ENCODE measurements at regions of chr10 and their contacts with region 1.

Region 1: GRCh38 chr10:2425320-2425719 is 642.0 kb upstream of the PFKP start:
- DNase-seq: no peak
- H3K4me3 ChIP-seq: no peak overlapping the region
- H3K4me3 Mint-ChIP-seq: no peak overlapping the region
- H3K27ac ChIP-seq: no peak overlapping the region
- H3K27ac Mint-ChIP-seq: no peak overlapping the region
- H3K4me1 ChIP-seq: no peaks in the 10 kb centered on the region
- H3K4me1 Mint-ChIP-seq: no peaks in the 10 kb centered on the region
- H3K27me3 ChIP-seq: no peaks in the 10 kb centered on the region
- H3K27me3 Mint-ChIP-seq: peaks cover 0 to 5% of the 10 kb centered on the region in 2 donors

Region 2: GRCh38 chr10:2362331-2362730 is 63.0 kb before region 1 on chr10:
- CTCF ChIA-PET with region 1: no interaction called
- POLR2A ChIA-PET with region 1: no interaction called
- intact Hi-C with region 1: loop called (anchors 5 kb)
- DNase-seq: no peak
- H3K4me3 ChIP-seq: no peak overlapping the region
- H3K4me3 Mint-ChIP-seq: no peak overlapping the region
- H3K27ac ChIP-seq: no peak overlapping the region
- H3K27ac Mint-ChIP-seq: no peak overlapping the region
- H3K4me1 ChIP-seq: no peaks in the 10 kb centered on the region
- H3K4me1 Mint-ChIP-seq: no peaks in the 10 kb centered on the region
- H3K27me3 ChIP-seq: no peaks in the 10 kb centered on the region
- H3K27me3 Mint-ChIP-seq: peaks cover 0 to 2% of the 10 kb centered on the region in 2 donors

Region 3: DNA sequence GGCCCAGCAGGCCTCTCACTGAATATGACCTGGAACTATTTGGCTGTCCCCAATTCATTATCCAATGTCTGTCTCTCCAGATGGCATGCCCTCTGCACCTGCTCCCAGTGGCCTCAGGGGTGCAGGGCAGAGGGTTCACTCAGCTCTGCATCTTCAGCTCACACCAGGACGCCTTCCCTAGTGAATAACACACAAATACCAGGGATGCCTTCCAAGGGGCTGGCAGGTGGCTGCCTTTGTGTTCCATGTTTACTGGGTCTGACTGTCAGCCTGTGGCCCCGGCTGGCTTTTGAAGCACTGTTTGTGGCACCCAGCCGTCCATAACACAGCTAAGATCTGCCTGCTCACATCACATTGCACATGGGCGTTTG is 51.8 kb after region 1 on chr10:
- CTCF ChIA-PET with region 1: no interaction called
- POLR2A ChIA-PET with region 1: no interaction called
- intact Hi-C with region 1: no loop called
- DNase-seq: no peak
- H3K4me3 ChIP-seq: no peak overlapping the region
- H3K4me3 Mint-ChIP-seq: no peak overlapping the region
- H3K27ac ChIP-seq: no peak overlapping the region
- H3K27ac Mint-ChIP-seq: no peak overlapping the region
- H3K4me1 ChIP-seq: no peaks in the 10 kb centered on the region
- H3K4me1 Mint-ChIP-seq: peaks cover 0 to 1% (median 0%) of the 10 kb centered on the region in 4 donors
- H3K27me3 ChIP-seq: no peaks in the 10 kb centered on the region
- H3K27me3 Mint-ChIP-seq: peaks cover 0 to 1% of the 10 kb centered on the region in 2 donors

Measured in CD4-positive, alpha-beta memory T cell (primary cell).